Psoas muscle (tissue), 8 donors: ENCODE measurements at regions of chr3 and their contacts with region 1.

Region 1: DNA sequence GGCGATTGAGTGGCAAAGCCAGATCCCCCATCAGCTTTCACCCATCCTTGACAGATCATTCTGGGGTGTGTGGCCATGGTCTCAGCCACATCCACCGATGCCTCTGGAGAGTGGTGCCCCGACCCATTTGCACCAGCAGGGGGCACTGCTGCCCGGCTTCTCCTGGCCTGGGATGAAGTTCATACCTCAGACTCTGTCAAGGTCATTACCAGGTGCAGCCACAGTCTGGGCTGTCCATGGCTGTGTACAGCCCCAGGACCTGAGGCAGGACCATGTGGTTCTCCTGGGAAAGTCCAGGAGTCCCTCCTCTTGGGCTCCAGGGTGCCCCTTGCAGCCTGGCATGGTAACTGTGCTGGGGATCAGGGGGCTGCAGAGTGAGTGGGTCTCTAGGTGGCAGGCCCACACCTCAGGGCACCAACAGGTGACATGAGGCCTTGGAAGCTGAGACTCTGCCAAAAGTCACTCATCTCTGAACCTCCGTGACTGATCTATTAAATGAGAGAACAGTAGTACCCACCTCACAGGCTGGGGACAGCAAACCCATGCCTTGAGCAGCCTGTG is 67.2 kb downstream of the CACNA2D2 start:
- DNase-seq: peak; percentile 51 to 78
- ATAC-seq: peak; percentile 73 to 88 (median 84)
- H3K4me3 ChIP-seq: no peak overlapping the region
- H3K27ac ChIP-seq: no peak overlapping the region
- H3K4me1 ChIP-seq: peaks cover 3% of the 10 kb centered on the region
- H3K27me3 ChIP-seq: no peaks in the 10 kb centered on the region
- CTCF ChIP-seq: peak; percentile 81

Region 2: GRCh38 chr3:49929331-49930240 is 506.6 kb before region 1 on chr3 and contains the start of gene MON1A:
- intact Hi-C with region 1: no loop called
- DNase-seq: peak; percentile 98
- ATAC-seq: peak; percentile 97 to 99 (median 98)
- H3K4me3 ChIP-seq: peak within 1 kb of the TSS; percentile 84
- H3K27ac ChIP-seq: peak within 1 kb of the TSS; percentile 93
- H3K4me1 ChIP-seq: peaks cover 28% of the 10 kb centered on the region
- H3K27me3 ChIP-seq: no peaks in the 10 kb centered on the region
- CTCF ChIP-seq: peak; percentile 24
- total RNA-seq, gene MON1A: 13.7 to 15.9 (median 15.0) TPM

Region 3: GRCh38 chr3:50358911-50359759 is 77.1 kb before region 1 on chr3 and contains the start of gene TMEM115:
- intact Hi-C with region 1: no loop called
- DNase-seq: peak; percentile 96 to 98
- ATAC-seq: peak; percentile 96 to 98 (median 96)
- H3K4me3 ChIP-seq: peak within 1 kb of the TSS; percentile 82
- H3K27ac ChIP-seq: peak within 1 kb of the TSS; percentile 95
- H3K4me1 ChIP-seq: peaks cover 37% of the 10 kb centered on the region
- H3K27me3 ChIP-seq: no peaks in the 10 kb centered on the region
- CTCF ChIP-seq: no peak
- total RNA-seq, gene TMEM115: 20.4 to 29.1 (median 23.2) TPM

Region 4: GRCh38 chr3:50487181-50487580 is 51.0 kb after region 1 on chr3:
- intact Hi-C with region 1: loop called in 1 of 2 experiments (anchors 1 kb)
- DNase-seq: no peak
- ATAC-seq: no peak
- H3K4me3 ChIP-seq: no peak overlapping the region
- H3K27ac ChIP-seq: no peak overlapping the region
- H3K4me1 ChIP-seq: no peaks in the 10 kb centered on the region
- H3K27me3 ChIP-seq: no peaks in the 10 kb centered on the region
- CTCF ChIP-seq: no peak